Activated naive CD4-positive, alpha-beta T cell treated with anti-CD3 and anti-CD28 coated beads, Interleukin-2, amount 10 ng/mL, durations not matched to agents 7 days and 5 days (primary cell): ENCODE measurements at regions of chr11 and their contacts with region 1.

Region 1: DNA sequence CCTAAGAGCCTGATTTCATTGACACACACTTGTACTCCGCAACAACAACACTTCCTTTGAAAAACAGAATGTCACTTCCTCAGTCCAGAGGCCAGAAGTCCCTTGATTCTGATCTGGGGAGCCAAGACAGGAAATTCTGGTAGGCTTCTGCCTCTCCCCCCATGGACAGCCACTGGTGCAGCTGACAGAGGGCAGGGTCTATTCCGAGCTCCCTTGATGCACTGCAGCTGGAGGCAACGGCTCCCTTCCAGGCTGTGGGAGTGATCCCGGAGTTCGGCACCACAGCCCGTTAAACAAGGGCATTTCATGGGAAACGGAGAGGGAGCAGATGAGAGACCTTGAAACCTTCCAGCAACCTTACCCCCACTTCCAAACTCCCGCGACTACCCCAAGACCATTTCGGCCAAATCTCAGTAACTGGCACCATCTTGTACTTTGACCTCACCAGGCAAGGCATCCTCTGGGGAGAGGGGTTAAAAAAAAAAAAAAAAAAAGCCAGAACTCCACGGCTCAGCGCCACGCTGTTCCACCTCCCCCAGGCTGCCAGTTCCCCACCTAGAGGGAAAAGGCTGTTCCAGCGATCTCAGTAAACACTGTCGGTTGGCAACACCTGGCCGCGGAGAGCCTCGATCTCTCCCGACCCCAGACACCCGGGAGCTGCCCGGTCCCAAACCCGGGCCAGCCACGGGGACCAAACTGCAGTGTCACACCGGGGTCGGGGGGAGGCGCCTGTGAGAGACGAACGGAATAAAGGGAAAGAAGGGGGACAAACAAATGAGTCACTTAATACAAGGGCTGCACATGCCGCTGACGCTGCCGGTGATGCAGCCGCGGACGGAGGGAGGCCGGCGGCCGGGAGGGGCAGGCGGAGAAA is 1.1 kb downstream of the GAB2 start:
- DNase-seq: peak; percentile 85
- H3K4me3 Mint-ChIP-seq: peak overlapping the region; percentile 92
- H3K27ac Mint-ChIP-seq: peak overlapping the region; percentile 91
- H3K4me1 Mint-ChIP-seq: peaks cover 46% of the 10 kb centered on the region
- H3K27me3 Mint-ChIP-seq: peaks cover 38% of the 10 kb centered on the region

Region 2: GRCh38 chr11:78228467-78228866 is 188.1 kb before region 1 on chr11:
- CTCF ChIA-PET with region 1: interaction called, 28 read pairs
- DNase-seq: peak; percentile 39
- H3K4me3 Mint-ChIP-seq: no peak overlapping the region
- H3K27ac Mint-ChIP-seq: no peak overlapping the region
- H3K4me1 Mint-ChIP-seq: peaks cover 55% of the 10 kb centered on the region
- H3K27me3 Mint-ChIP-seq: no peaks in the 10 kb centered on the region

Region 3: GRCh38 chr11:78304201-78304600 is 112.3 kb before region 1 on chr11:
- CTCF ChIA-PET with region 1: no interaction called
- DNase-seq: no peak
- H3K4me3 Mint-ChIP-seq: no peak overlapping the region
- H3K27ac Mint-ChIP-seq: no peak overlapping the region
- H3K4me1 Mint-ChIP-seq: peaks cover 3% of the 10 kb centered on the region
- H3K27me3 Mint-ChIP-seq: peaks cover 6% of the 10 kb centered on the region

Region 4: DNA sequence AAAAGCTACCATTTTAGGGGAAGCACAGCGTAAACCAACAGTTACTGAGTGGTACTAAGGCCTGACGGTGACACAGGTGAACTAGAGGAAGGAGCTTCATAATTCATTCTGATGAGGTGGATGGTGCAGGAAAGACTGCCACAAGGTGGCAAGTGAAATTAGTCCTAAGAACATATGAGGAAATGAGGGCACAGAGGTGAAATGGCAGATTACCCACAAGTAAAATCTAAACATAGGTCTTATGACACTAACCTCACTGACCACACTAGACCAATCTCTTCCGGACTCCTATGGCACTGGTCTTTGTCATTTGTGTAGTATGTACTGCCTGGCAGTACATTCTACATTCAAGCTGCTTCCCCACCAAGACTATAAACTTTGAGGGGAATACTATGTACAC is 19.2 kb before region 1 on chr11:
- CTCF ChIA-PET with region 1: no interaction called
- DNase-seq: peak; percentile 33
- H3K4me3 Mint-ChIP-seq: no peak overlapping the region
- H3K27ac Mint-ChIP-seq: peak overlapping the region; percentile 38
- H3K4me1 Mint-ChIP-seq: peaks cover 20% of the 10 kb centered on the region
- H3K27me3 Mint-ChIP-seq: no peaks in the 10 kb centered on the region

Region 5: GRCh38 chr11:78432058-78432515 is 15.5 kb after region 1 on chr11:
- CTCF ChIA-PET with region 1: interaction called, 70 read pairs
- DNase-seq: peak; percentile 35
- H3K4me3 Mint-ChIP-seq: no peak overlapping the region
- H3K27ac Mint-ChIP-seq: no peak overlapping the region
- H3K4me1 Mint-ChIP-seq: peaks cover 14% of the 10 kb centered on the region
- H3K27me3 Mint-ChIP-seq: no peaks in the 10 kb centered on the region

Region 6: DNA sequence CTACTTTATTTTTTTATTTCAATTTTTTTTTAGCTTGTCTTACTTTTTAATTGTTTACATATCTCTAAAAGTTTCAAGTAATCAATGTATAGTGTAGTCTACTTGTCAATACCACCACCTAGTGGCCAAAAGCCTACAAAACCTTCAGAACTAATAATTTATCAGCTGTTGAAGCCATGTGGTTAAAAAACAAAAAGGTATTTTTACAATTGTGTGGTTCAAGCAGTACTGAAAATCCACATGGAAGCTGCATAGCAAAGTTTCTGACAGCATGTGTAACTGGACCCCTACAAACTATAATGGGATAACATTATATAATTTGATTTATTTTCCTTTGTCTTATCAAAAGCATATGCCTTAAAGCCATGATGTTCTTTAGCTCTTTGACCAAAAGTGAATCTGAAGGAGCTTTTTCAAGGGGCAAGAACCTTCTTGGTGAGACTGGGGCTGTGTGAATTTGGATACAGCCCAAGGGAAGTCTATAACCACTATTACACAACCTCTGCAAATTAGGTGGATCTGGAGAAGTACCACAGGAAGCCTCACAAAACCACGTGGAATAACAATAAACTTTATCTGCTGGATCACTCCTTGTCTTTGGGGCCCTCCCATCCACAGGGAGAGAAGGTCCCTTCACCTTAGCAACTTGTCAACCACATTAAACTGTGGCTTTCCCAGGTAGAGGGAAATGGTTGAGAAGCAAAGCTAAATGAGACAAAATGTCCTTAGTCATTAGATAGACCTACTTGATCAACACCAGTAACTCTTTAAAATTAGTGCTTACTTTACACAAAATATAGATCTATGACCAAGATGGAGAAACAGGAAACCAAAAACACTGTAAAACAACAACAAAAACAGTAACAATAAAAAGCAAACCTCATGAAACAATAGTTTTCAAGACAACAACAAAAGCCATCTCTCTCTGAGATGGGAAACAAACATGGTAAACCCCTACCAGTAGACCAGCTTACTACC is 148.2 kb after region 1 on chr11:
- CTCF ChIA-PET with region 1: interaction called, 100 read pairs
- DNase-seq: peak; percentile 52
- H3K4me3 Mint-ChIP-seq: no peak overlapping the region
- H3K27ac Mint-ChIP-seq: peak overlapping the region; percentile 73
- H3K4me1 Mint-ChIP-seq: peaks cover 45% of the 10 kb centered on the region
- H3K27me3 Mint-ChIP-seq: no peaks in the 10 kb centered on the region

Region 7: DNA sequence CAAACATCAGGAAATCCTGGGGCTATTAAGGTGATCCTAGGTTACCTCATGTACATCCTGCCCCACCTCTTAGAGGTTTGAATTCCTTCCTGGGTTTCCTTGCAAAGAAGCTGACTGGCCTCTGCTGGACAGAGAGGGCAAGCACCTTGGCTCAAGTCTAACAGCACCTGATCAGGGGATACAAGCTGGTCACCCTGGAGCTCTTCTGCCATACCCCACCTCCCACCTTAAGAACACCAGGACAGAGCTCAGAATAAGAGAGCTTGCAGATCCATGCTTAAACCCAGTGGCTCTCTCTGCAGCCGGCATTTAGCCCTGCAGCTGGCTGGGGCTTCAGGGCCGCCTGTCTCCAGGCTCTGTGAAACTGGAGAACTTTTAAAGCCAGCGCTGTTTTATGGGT is 544.7 kb after region 1 on chr11:
- CTCF ChIA-PET with region 1: no interaction called
- DNase-seq: no peak
- H3K4me3 Mint-ChIP-seq: no peak overlapping the region
- H3K27ac Mint-ChIP-seq: no peak overlapping the region
- H3K4me1 Mint-ChIP-seq: no peaks in the 10 kb centered on the region
- H3K27me3 Mint-ChIP-seq: peaks cover 30% of the 10 kb centered on the region